OCI-LY7 (cell line): ENCODE measurements at regions of chr20 and their contacts with region 1.

Region 1: DNA sequence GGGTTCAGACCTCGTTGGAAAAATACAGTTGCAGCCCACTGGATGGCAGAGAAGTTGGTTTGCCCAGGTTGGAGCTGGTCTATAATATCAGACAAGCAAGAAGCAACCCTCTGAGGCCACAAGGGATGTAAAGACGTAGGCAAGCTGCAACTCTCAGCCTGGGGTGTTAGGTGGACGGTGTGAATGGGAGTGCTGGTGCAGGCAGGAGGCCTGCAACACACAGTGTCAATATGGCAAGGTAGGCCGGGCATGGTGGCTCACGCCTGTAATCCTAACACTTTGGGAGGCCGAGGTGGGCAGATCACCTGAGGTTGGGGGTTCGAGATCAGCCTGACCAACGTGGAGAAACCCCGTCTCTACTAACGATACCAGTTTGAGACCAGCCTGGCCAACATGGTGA is 10.5 kb downstream of the VPS16 start:
- DNase-seq: no peak
- H3K4me3 ChIP-seq: no peak overlapping the region
- H3K27ac ChIP-seq: no peak overlapping the region
- H3K4me1 ChIP-seq: no peaks in the 10 kb centered on the region
- CTCF ChIP-seq: no peak

Region 2: GRCh38 chr20:2756056-2756611 is 95.0 kb before region 1 on chr20:
- CTCF ChIA-PET with region 1: no interaction called
- POLR2A ChIA-PET with region 1: no interaction called
- intact Hi-C with region 1: loop called (anchors 5 kb)
- DNase-seq: no peak
- H3K4me3 ChIP-seq: no peak overlapping the region
- H3K27ac ChIP-seq: no peak overlapping the region
- H3K4me1 ChIP-seq: peaks cover 22% of the 10 kb centered on the region
- CTCF ChIP-seq: peak; percentile 46

Region 3: DNA sequence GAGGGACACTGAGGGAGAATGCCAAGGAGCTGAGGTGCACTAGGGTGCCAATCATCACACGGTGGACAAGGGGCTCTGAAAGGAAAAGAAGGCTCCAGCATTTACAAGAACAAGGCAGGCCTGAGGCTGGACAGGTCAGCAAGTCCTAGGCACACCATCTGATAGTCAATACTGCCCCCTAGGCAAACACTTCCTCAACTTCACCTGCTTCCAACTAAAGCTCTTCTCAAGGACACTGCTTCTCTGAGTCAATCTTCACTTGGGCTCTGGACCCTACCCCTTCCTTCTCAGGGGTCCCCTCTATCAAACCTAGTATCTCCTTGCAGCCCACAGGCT is 425.6 kb after region 1 on chr20:
- CTCF ChIA-PET with region 1: no interaction called
- POLR2A ChIA-PET with region 1: no interaction called
- intact Hi-C with region 1: no loop called
- DNase-seq: peak; percentile 14
- H3K4me3 ChIP-seq: no peak overlapping the region
- H3K27ac ChIP-seq: no peak overlapping the region
- H3K4me1 ChIP-seq: no peaks in the 10 kb centered on the region
- CTCF ChIP-seq: peak; percentile 63